Thyroid gland (tissue), 4 donors: ENCODE measurements at regions of chr14 and their contacts with region 1.

Region 1: GRCh38 chr14:58244556-58245387 is at the start of gene PSMA3:
- DNase-seq: peak; percentile 97 to 99
- H3K4me3 ChIP-seq: peak within 1 kb of the TSS; percentile 53 to 95 (median 81)
- H3K27ac ChIP-seq: peak within 1 kb of the TSS; percentile 91 to 97 (median 94)
- H3K4me1 ChIP-seq: peaks cover 23 to 28% of the 10 kb centered on the region in 2 donors
- H3K27me3 ChIP-seq: no peaks in the 10 kb centered on the region
- CTCF ChIP-seq: no peak
- POLR2A ChIP-seq: peak in 1 of 2 donors; percentile 89
- total RNA-seq, gene PSMA3: 98.6 to 151 (median 131) TPM

Region 2: DNA sequence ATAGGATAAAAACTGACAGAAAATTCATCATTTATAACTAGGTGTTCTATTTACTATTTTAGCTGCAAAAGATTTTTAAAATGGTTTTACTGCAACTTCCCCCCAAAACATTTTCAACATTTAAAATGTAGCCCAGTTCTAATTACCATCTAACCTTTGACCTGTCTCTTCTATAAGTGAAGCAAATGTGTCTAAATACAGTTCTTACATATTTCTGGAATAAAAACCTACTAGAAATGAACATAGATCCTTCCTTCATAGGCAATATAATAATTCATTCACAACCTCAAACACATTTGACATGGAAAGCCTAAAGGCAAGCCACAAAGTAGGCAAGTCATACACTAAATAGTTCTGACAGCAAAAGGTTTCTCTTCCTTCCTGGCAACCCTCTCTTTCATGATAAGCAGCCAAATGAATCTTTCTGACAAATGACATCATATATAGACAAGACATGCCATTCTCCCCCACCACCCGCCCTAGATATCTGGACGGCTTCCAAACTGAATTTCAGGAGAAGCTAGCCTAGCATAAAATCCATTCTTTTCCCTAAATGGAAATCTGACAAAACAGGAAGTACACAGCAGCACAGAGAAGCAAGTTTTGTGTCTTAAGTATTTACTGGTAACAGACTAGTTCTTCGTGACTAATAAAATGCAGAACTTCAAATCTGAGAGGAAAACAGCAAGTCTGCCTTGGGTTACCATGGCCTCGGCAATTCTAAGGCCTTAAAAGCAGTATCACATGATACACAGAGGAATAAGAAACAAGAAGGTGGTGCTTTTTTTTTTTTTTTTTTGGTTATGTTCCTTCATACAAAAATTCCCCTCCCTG is 36.4 kb after region 1 on chr14:
- intact Hi-C with region 1: no loop called
- DNase-seq: peak; percentile 19 to 59
- H3K4me3 ChIP-seq: no peak overlapping the region
- H3K27ac ChIP-seq: peak overlapping the region; percentile 57 to 74 (median 72)
- H3K4me1 ChIP-seq: peaks cover 13 to 27% of the 10 kb centered on the region in 2 donors
- H3K27me3 ChIP-seq: no peaks in the 10 kb centered on the region
- CTCF ChIP-seq: no peak
- POLR2A ChIP-seq: no peak

Region 3: DNA sequence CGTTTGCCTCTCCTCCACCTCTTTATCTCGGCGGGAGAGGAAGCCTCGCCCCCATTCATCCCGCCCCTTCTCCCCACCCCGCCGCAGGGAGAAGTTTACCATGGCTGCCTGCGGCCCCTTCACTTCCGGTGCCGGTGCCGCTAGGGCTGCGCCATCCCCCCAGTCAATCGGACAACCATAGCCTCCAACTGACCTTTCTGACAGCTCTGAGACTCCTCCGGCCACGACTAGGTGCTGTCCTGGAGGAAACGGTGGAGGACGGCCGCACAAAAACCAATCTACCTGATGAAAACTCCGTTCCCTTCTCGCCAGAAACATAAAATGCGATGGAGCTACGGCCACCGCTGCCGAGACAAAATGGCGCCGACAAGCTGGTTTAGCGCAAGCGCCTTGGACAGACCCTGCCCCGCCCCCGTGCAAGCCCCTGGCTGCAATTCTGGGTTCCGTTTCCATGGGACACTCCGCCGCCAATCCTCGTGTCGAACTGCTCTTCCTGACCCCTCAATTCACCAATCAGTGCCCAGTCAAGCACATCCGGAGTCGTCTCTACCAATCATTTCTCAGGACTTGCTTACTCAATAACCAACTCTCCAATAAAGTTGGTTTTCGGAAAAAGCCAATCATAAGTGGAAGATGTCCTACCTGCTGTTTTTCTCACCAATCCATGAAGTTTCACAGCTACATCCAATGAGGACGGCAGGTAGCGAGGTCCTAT is 53.1 kb after region 1 on chr14:
- intact Hi-C with region 1: loop called (anchors 5 kb)
- DNase-seq: peak; percentile 99
- H3K4me3 ChIP-seq: peak overlapping the region; percentile 38 to 93 (median 44)
- H3K27ac ChIP-seq: peak overlapping the region; percentile 91 to 98 (median 96)
- H3K4me1 ChIP-seq: peaks cover 17 to 18% of the 10 kb centered on the region in 2 donors
- H3K27me3 ChIP-seq: no peaks in the 10 kb centered on the region
- CTCF ChIP-seq: no peak
- POLR2A ChIP-seq: peak; percentile 24 to 62